K562 (cell line): ENCODE measurements at regions of chr1 and their contacts with region 1.

Region 1: GRCh38 chr1:26666855-26667254 is 29.0 kb upstream of the ARID1A start:
- DNase-seq: peak in 1 of 4 experiments; percentile 45
- ATAC-seq: peak; percentile 35; the same call in 1 of the 3 replicates
- H3K4me3 ChIP-seq: no peak overlapping the region
- H3K27ac ChIP-seq: no peak overlapping the region
- H3K4me1 ChIP-seq: peaks cover 8 to 13% of the 10 kb centered on the region in 2 experiments
- H3K27me3 ChIP-seq: no peaks in the 10 kb centered on the region
- CTCF ChIP-seq: no peak
- EP300 ChIP-seq: no peak
- POLR2A ChIP-seq: no peak
- RAD21 ChIP-seq: no peak

Region 2: GRCh38 chr1:25858906-25859789 is 807.7 kb before region 1 on chr1 and contains the start of gene AUNIP:
- CTCF ChIA-PET with region 1: no interaction called
- POLR2A ChIA-PET with region 1: no interaction called
- in situ Hi-C with region 1: no loop called
- intact Hi-C with region 1: no loop called
- DNase-seq: peak; percentile 97 to 100 (median 98)
- ATAC-seq: peak; percentile 88
- H3K4me3 ChIP-seq: peak within 1 kb of the TSS; percentile 87
- H3K27ac ChIP-seq: peak within 1 kb of the TSS; percentile 92
- H3K4me1 ChIP-seq: peaks cover 49 to 60% of the 10 kb centered on the region in 2 experiments
- H3K27me3 ChIP-seq: no peaks in the 10 kb centered on the region
- CTCF ChIP-seq: 0 out of 6 replicates have a peak, but pooled peaks of 2 of the 3 experiments have one; percentile 12 to 15
- EP300 ChIP-seq: 0 out of 2 replicates have a peak, but pooled peaks have one; percentile 2
- POLR2A ChIP-seq: peak; percentile 97
- RAD21 ChIP-seq: peak in 1 of 2 experiments; percentile 23; a peak in 1 of 4 replicates
- polyA plus RNA-seq, gene AUNIP: 12.1 to 15.2 TPM

Region 3: DNA sequence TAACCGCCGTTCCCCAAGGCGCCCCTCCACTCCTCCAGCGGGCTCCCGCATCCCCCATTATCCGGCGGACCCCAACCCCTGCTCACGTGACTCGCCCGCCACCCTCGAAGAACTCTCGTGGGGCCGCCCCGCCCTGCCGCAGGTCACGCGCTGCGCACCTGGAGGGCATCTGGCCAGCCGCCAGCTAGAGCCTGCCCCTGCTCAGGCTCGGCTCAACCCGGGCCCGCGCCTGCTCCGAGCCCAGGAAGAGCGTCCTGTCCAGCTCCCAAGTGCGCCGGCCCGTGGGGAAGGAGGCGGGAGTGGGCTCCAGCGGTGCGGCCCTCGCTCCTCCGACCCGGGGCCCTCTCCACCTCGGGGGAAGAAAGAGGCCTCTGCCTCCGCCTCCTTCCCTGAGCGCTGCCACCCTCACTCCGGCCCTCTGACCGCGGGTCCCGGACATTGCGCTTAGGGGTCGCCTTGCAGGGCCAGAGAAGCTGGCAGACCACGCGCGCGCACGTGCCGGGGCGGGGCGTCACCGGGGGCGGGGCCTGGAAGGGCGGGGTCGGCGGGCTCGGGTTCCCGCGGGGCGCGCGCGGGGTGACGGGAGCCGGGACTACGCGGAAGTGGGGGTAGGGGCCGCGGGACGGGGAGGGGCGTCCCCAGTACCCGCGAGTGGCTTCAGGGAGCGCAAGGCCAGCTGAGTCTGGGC is 166.2 kb before region 1 on chr1:
- CTCF ChIA-PET with region 1: no interaction called
- POLR2A ChIA-PET with region 1: no interaction called
- in situ Hi-C with region 1: no loop called
- intact Hi-C with region 1: no loop called
- DNase-seq: peak; percentile 92 to 97 (median 96)
- ATAC-seq: peak; percentile 85
- H3K4me3 ChIP-seq: peak overlapping the region; percentile 55
- H3K27ac ChIP-seq: peak overlapping the region; percentile 83
- H3K4me1 ChIP-seq: peaks cover 13 to 29% of the 10 kb centered on the region in 2 experiments
- H3K27me3 ChIP-seq: no peaks in the 10 kb centered on the region
- CTCF ChIP-seq: no peak
- EP300 ChIP-seq: no peak; the same call in 1 of the 2 replicates
- POLR2A ChIP-seq: no peak
- RAD21 ChIP-seq: no peak

Region 4: DNA sequence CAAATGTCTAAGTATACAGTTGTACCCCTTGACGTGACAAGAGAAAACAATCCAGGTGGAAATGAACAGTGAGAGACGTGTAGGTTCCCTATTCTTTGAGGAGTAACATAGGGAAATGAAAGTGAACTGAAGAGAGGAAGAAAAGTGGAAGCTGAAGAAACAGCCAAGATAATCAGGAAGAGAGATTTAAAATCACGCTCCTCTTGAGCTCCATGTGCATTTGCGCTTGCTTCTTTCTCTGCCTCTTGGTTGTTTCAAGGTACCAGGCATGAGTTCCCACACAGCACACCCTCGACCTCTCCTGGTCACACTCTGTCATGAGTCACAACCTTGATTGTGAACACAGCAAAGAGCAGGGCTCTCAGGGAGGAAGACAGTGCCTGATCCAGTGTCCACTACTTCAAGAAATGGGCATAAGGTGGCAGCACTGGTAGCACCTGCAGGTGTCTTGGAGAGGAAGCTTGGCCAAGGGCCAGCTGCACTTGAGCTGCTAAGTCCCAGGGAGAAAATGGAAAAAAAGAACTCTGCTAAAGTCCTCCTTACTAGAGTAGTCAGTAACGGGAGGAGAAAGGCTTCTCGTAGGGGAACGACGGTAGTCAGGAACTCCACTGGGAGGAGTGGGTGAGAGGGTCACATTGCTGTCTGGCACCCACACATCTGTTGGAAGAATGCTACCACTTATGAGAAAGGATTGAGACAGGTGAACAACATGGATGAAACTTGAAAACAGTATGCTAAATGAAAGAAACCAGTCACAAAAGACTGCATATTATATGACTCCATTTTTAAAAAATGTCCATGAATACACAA is 10.7 kb after region 1 on chr1:
- CTCF ChIA-PET with region 1: no interaction called
- POLR2A ChIA-PET with region 1: interaction called, 21 read pairs
- in situ Hi-C with region 1: no loop called
- intact Hi-C with region 1: no loop called
- DNase-seq: peak; percentile 52 to 87 (median 73)
- ATAC-seq: peak; percentile 99
- H3K4me3 ChIP-seq: no peak overlapping the region
- H3K27ac ChIP-seq: no peak overlapping the region
- H3K4me1 ChIP-seq: peaks cover 9% of the 10 kb centered on the region in 2 experiments; a peak in 3 of 5 replicates
- H3K27me3 ChIP-seq: no peaks in the 10 kb centered on the region
- CTCF ChIP-seq: peak; percentile 83 to 95 (median 87)
- EP300 ChIP-seq: peak; percentile 41
- POLR2A ChIP-seq: no peak
- RAD21 ChIP-seq: peak; percentile 97 to 98